HEK293 (cell line): ENCODE measurements at regions of chrX and their contacts with region 1.

Region 1: DNA sequence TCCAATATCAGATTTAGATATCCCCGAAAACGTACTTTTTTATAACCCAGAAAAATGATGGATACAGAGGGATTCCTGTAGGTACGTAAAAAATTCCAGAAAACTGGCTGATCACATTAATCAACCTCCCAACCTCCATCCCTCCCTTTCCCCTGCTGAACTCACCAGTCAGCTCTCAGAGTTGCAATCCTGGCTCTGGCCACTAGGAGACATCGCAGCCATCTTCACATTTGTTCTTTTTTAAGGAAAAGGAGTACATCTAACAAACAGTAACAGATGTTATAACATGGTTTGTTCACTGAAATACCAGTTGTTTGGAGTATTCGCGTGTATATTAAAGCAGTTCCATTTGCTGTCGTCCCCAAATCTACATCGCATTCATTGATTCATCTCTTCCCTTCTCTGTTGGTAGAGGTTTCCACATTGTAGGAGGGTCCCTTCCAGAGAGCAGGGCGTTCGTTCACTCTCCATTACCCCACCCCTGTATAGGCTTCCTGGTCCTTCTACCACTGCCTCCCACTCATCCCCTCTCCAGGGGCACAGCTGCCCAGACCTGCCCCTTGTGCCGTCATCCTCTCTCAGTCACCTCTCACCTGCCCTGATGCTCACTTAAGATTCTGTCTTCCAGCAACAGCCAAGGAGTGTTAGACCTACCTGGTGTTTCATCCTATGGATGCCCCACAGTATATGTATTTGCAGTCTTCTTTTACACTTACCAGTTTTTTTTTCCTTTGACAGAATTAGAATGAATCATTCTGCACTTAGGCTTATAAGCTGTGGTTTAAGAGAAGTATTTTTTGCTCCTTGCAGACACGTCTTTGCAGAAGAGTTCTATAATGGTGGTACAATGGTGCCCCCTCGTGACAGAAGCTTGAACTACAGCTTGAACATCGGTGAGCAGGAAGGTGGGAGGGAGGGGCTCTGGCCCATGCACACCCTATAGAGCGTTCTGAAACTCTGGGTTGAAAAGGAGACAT is 36.8 kb upstream of the RAB40AL start:
- H3K4me3 ChIP-seq: no peak overlapping the region
- H3K27ac ChIP-seq: no peak overlapping the region
- H3K4me1 ChIP-seq: no peaks in the 10 kb centered on the region
- CTCF ChIP-seq: no peak

Region 2: GRCh38 chrX:102859547-102859871 is 40.7 kb before region 1 on chrX:
- CTCF ChIA-PET with region 1: interaction called, 12 read pairs
- POLR2A ChIA-PET with region 1: no interaction called
- H3K4me3 ChIP-seq: no peak overlapping the region
- H3K27ac ChIP-seq: no peak overlapping the region
- H3K4me1 ChIP-seq: no peaks in the 10 kb centered on the region
- CTCF ChIP-seq: no peak

Region 3: GRCh38 chrX:102887687-102888086 is 12.5 kb before region 1 on chrX:
- CTCF ChIA-PET with region 1: interaction called, 11 read pairs
- POLR2A ChIA-PET with region 1: no interaction called
- H3K4me3 ChIP-seq: no peak overlapping the region
- H3K27ac ChIP-seq: no peak overlapping the region
- H3K4me1 ChIP-seq: no peaks in the 10 kb centered on the region
- CTCF ChIP-seq: no peak